ENCODE measurements at regions of chr5 and their contacts with region 1.

Region 1: GRCh38 chr5:180071531-180072255 is at the start of gene RNF130:
- DNase-seq: peak; percentile 95
- H3K4me3 Mint-ChIP-seq: peak within 1 kb of the TSS; percentile 77
- H3K27ac Mint-ChIP-seq: peak within 1 kb of the TSS; percentile 36
- H3K4me1 Mint-ChIP-seq: peaks cover 9% of the 10 kb centered on the region
- H3K27me3 Mint-ChIP-seq: peaks cover 41% of the 10 kb centered on the region
- total RNA-seq, gene RNF130: 7.3 and 8.9 TPM in 2 replicates

Region 2: GRCh38 chr5:179668391-179668790 is 403.3 kb before region 1 on chr5:
- intact Hi-C with region 1: no loop called
- DNase-seq: peak; percentile 78
- H3K4me3 Mint-ChIP-seq: no peak overlapping the region
- H3K27ac Mint-ChIP-seq: no peak overlapping the region
- H3K4me1 Mint-ChIP-seq: no peaks in the 10 kb centered on the region
- H3K27me3 Mint-ChIP-seq: no peaks in the 10 kb centered on the region

Region 3: DNA sequence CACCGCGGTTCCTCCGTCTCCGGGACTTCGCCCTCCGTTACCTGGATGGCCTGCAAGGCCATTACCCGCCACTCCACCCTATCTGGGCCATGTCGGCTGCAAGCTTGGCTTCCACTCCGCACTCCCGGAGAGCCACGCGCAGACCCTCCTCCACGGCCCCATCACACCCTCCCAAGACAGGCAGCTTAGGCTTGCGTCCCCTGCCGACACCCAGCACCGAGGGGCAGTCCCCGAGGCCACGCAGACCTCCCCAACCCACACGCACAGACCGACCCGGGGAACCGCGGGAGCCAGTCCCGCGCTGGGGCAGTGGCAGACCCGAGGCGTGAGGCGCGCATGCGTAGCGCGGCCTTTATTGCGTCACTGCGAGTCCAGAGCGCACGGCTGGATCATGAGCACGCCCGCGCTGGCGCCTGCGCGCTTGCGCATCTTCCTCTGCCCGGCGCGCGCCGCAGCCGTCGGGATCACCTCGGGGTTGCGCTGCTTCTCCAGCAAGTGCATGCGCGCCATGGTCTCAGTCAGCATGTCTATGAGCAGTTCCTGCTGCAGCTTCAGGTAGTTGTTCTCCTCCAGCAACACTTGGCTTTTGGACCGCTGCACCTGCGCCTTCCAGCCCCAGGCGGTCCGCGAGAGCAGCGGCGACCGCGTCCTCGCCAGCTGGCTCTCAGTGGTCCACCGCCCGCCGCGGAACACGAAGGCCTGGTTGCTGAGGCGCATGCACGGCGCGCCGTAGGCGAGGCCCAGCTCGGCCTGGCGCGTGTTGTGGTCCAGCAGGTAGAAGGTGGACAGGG is 393.3 kb before region 1 on chr5:
- intact Hi-C with region 1: loop called (anchors 5 kb)
- DNase-seq: peak; percentile 98
- H3K4me3 Mint-ChIP-seq: peak overlapping the region; percentile 100
- H3K27ac Mint-ChIP-seq: peak overlapping the region; percentile 99
- H3K4me1 Mint-ChIP-seq: peaks cover 31% of the 10 kb centered on the region
- H3K27me3 Mint-ChIP-seq: no peaks in the 10 kb centered on the region

Region 4: GRCh38 chr5:179791881-179792611 is 279.6 kb before region 1 on chr5:
- intact Hi-C with region 1: no loop called
- DNase-seq: no peak
- H3K4me3 Mint-ChIP-seq: no peak overlapping the region
- H3K27ac Mint-ChIP-seq: no peak overlapping the region
- H3K4me1 Mint-ChIP-seq: peaks cover 13% of the 10 kb centered on the region
- H3K27me3 Mint-ChIP-seq: no peaks in the 10 kb centered on the region

Region 5: GRCh38 chr5:179907570-179908324 is 163.9 kb before region 1 on chr5 and contains the start of gene TBC1D9B:
- intact Hi-C with region 1: loop called (anchors 1 kb)
- DNase-seq: peak; percentile 92
- H3K4me3 Mint-ChIP-seq: peak within 1 kb of the TSS; percentile 96
- H3K27ac Mint-ChIP-seq: peak within 1 kb of the TSS; percentile 92
- H3K4me1 Mint-ChIP-seq: peaks cover 11% of the 10 kb centered on the region
- H3K27me3 Mint-ChIP-seq: no peaks in the 10 kb centered on the region
- total RNA-seq, gene TBC1D9B: 129 and 138 TPM in 2 replicates

Region 6: GRCh38 chr5:180433032-180433422 is 361.3 kb after region 1 on chr5:
- intact Hi-C with region 1: no loop called
- DNase-seq: no peak
- H3K4me3 Mint-ChIP-seq: no peak overlapping the region
- H3K27ac Mint-ChIP-seq: no peak overlapping the region
- H3K4me1 Mint-ChIP-seq: no peaks in the 10 kb centered on the region
- H3K27me3 Mint-ChIP-seq: peaks cover 6% of the 10 kb centered on the region